ENCODE measurements at regions of chr9 and their contacts with region 1.

Region 1: GRCh38 chr9:124291801-124292396 is 34.1 kb downstream of the NEK6 start:
- DNase-seq: no peak

Region 2: DNA sequence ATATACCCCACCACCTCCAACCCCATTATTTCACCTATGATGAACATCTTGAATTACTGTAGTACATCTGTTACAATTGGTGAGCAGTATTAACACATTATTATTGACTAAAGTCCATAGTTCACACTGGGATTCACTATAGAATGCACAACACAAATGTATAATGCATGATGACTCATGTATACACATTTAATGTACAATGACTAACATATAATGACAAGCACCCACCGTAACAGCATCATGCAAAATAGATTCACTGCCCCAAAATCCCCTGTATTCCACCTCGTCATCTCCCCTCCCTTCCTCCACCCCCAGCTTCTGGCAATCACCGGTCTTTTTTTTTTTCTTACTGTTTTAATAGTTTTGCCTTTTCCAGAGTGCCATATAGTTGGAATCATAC is 81.2 kb before region 1 on chr9:
- intact Hi-C with region 1: loop called in 1 of 2 experiments (anchors 2 kb)
- DNase-seq: no peak

Region 3: GRCh38 chr9:124320062-124320973 is 28.4 kb after region 1 on chr9:
- intact Hi-C with region 1: no loop called
- DNase-seq: no peak

Region 4: GRCh38 chr9:124366476-124367171 is 74.7 kb after region 1 on chr9:
- intact Hi-C with region 1: loop called in 1 of 2 experiments (anchors 2 kb)
- DNase-seq: no peak